ENCODE measurements at regions of chr11 and their contacts with region 1.

Region 1: GRCh38 chr11:96012086-96012824 is 88.3 kb upstream of the MTMR2 start:
- DNase-seq: peak; percentile 20
- H3K4me3 Mint-ChIP-seq: no peak overlapping the region
- H3K27ac Mint-ChIP-seq: peak overlapping the region; percentile 75
- H3K4me1 Mint-ChIP-seq: peaks cover 49% of the 10 kb centered on the region
- H3K27me3 Mint-ChIP-seq: no peaks in the 10 kb centered on the region

Region 2: DNA sequence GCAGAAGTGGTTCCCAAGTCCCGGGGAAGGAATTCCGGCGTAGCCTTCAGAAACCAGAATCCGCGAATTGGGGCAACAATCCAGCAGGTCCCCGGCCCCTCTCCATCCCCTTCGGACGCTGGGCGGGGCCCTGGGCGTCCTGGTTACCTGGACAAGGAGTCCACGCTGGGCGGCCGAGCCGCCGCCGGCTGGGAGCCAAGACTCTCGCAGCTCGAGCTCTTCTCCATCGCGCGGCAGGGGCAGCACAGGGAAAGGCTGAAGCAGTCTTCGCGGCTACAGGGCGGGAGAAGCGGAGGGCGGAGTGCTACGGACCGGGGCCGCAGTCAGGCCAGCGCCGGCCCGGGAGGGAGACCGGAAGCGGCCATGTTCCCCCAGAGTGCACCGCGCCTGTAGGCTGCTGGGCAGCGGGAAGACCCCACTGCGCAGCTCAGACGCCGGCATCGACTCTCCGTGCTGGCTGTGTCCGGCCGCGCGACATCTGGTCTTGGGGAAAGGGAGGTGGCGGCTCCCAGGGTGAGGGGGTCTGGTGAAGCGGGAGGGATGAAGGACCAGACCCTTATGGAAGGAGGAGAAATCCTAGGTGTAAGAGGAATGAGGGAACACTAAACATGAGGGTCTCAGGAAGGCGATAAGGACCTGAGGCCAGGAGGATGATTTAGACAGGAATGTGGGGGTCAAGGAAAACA is 88.4 kb before region 1 on chr11 and contains the start of gene MTMR2:
- intact Hi-C with region 1: loop called (anchors 5 kb)
- DNase-seq: peak; percentile 39
- H3K4me3 Mint-ChIP-seq: peak within 1 kb of the TSS; percentile 100
- H3K27ac Mint-ChIP-seq: peak within 1 kb of the TSS; percentile 86
- H3K4me1 Mint-ChIP-seq: peaks cover 31% of the 10 kb centered on the region
- H3K27me3 Mint-ChIP-seq: peaks cover 3% of the 10 kb centered on the region
- total RNA-seq, gene MTMR2: 41.3 and 41.7 TPM in 2 replicates

Region 3: DNA sequence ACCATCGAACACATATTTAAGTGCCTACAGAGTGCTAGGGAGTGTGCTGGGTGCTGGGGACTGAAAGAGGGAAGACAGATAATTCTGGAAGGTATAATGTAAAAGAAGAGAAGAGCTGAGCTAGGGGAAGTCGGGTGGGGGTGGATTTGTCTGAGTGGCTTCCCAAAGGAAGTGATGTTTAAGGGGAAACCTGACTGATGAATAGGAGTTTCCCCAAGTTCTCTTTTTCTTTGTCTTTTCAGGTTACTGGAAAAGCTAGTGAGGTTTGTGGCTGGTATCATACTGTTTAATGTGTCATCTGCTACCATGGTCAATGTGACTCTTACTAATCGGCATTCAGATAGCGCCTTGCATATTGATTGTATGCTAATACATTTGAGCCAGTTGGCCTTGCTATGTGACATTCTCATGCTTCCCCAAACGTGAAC is 63.3 kb after region 1 on chr11:
- intact Hi-C with region 1: loop called (anchors 2 kb)
- DNase-seq: no peak
- H3K4me3 Mint-ChIP-seq: peak overlapping the region; percentile 15
- H3K27ac Mint-ChIP-seq: peak overlapping the region; percentile 78
- H3K4me1 Mint-ChIP-seq: peaks cover 35% of the 10 kb centered on the region
- H3K27me3 Mint-ChIP-seq: no peaks in the 10 kb centered on the region

Region 4: DNA sequence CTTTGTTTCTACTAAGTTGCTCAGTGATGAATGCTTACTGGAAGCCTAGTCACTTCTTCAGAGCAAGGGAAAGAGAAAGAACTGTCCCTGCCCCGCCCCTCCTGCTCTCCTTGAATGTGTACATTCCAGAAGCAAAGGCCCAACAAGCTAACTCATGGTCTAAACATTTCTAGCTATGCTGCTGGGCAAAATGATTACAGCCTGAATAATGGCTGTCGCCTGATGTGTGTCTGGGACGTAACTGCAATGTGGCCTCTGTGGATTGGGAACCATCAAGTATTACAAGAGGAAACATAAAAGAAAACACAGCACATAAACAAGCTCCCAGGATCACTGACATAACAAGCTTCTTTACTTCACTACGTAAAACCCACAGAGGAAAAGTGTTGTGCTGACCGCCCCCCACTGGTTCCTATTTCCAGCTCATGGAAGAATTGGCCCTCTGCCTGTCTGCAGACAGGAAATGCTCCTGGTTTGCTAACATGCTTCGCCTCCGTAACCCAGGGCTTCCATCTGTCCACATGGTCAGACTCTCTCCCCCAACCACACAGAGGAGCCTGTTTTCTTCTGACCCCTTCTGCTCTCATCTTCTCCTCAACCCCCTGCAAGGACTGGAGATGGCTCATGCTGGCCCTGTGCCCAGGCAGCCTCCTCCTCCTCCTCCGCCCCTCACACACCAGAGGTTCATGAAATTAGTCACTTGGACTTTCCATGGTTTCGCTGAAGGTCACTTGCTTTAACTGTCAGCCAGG is 143.5 kb after region 1 on chr11:
- intact Hi-C with region 1: loop called (anchors 1 kb)
- DNase-seq: peak; percentile 41
- H3K4me3 Mint-ChIP-seq: peak overlapping the region; percentile 61
- H3K27ac Mint-ChIP-seq: peak overlapping the region; percentile 94
- H3K4me1 Mint-ChIP-seq: peaks cover 55% of the 10 kb centered on the region
- H3K27me3 Mint-ChIP-seq: no peaks in the 10 kb centered on the region

Region 5: GRCh38 chr11:96254087-96254486 is 241.8 kb after region 1 on chr11:
- intact Hi-C with region 1: loop called (anchors 1 kb)
- DNase-seq: peak; percentile 30
- H3K4me3 Mint-ChIP-seq: peak overlapping the region; percentile 77
- H3K27ac Mint-ChIP-seq: peak overlapping the region; percentile 92
- H3K4me1 Mint-ChIP-seq: peaks cover 75% of the 10 kb centered on the region
- H3K27me3 Mint-ChIP-seq: no peaks in the 10 kb centered on the region

Region 6: DNA sequence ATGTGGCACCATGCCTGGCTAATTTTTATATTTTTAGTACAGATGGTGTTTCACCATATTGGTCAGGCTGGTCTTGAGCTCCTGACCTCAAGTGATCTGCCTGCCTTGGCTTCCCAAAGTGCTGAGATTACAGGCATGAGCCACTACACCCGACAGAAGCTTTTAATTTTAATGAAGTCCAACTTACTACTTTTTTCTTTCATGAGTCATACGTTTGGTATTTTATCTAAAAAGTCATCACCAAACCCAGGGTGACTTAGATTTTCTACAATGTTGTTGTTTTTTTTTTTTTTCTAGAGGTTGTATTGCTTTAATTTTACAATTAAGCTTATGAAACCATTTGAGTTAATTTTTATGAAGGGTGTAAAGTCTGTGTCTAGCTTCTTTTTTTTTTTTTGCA is 412.4 kb after region 1 on chr11:
- intact Hi-C with region 1: loop called (anchors 2 kb)
- DNase-seq: no peak
- H3K4me3 Mint-ChIP-seq: no peak overlapping the region
- H3K27ac Mint-ChIP-seq: no peak overlapping the region
- H3K4me1 Mint-ChIP-seq: peaks cover 6% of the 10 kb centered on the region
- H3K27me3 Mint-ChIP-seq: peaks cover 46% of the 10 kb centered on the region